Activated CD4-positive, alpha-beta memory T cell treated with anti-CD3 and anti-CD28 coated beads for 36 hours (primary cell): ENCODE measurements at regions of chr17 and their contacts with region 1.

Region 1: GRCh38 chr17:66633317-66633965 is 201.5 kb upstream of the CACNG5 start:
- DNase-seq: peak; percentile 70
- H3K4me3 Mint-ChIP-seq: no peak overlapping the region
- H3K27ac Mint-ChIP-seq: peak overlapping the region; percentile 61
- H3K4me1 Mint-ChIP-seq: peaks cover 55% of the 10 kb centered on the region
- H3K27me3 Mint-ChIP-seq: no peaks in the 10 kb centered on the region

Region 2: DNA sequence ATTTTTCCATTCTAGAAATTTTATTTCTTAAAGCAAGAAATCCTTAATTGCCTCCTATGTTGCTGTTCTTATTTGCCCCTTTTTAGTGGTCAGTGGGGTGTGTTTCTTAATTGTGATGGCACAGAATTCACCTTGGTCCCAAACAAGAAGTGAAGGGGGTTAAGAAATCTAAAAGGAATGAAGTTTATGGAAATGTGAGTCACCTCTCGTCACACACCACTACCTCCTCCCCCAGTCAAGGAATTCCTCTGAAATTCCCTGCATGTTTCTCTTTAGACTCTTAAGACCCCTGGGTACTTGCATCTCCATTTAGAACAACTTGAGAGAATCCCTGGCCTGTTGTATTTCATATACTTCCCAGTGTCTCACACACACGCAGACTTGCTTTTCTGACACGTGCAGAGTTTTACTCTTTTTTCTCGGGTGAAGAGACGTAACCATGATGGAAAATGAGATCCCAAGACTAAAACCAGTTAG is 83.7 kb before region 1 on chr17:
- CTCF ChIA-PET with region 1: interaction called, 7 read pairs
- POLR2A ChIA-PET with region 1: no interaction called
- intact Hi-C with region 1: loop called (anchors 1 kb)
- DNase-seq: no peak
- H3K4me3 Mint-ChIP-seq: no peak overlapping the region
- H3K27ac Mint-ChIP-seq: no peak overlapping the region
- H3K4me1 Mint-ChIP-seq: peaks cover 56% of the 10 kb centered on the region
- H3K27me3 Mint-ChIP-seq: no peaks in the 10 kb centered on the region

Region 3: GRCh38 chr17:66655861-66656260 is 22.4 kb after region 1 on chr17:
- CTCF ChIA-PET with region 1: no interaction called
- POLR2A ChIA-PET with region 1: interaction called, 3 read pairs
- intact Hi-C with region 1: loop called (anchors 2 kb)
- DNase-seq: peak; percentile 85
- H3K4me3 Mint-ChIP-seq: no peak overlapping the region
- H3K27ac Mint-ChIP-seq: peak overlapping the region; percentile 68
- H3K4me1 Mint-ChIP-seq: peaks cover 54% of the 10 kb centered on the region
- H3K27me3 Mint-ChIP-seq: no peaks in the 10 kb centered on the region

Region 4: GRCh38 chr17:66667491-66668030 is 34.1 kb after region 1 on chr17:
- CTCF ChIA-PET with region 1: no interaction called
- POLR2A ChIA-PET with region 1: no interaction called
- intact Hi-C with region 1: loop called (anchors 1 kb)
- DNase-seq: peak; percentile 85
- H3K4me3 Mint-ChIP-seq: peak overlapping the region; percentile 31
- H3K27ac Mint-ChIP-seq: peak overlapping the region; percentile 69
- H3K4me1 Mint-ChIP-seq: peaks cover 80% of the 10 kb centered on the region
- H3K27me3 Mint-ChIP-seq: no peaks in the 10 kb centered on the region

Region 5: GRCh38 chr17:66691644-66692420 is 58.4 kb after region 1 on chr17:
- CTCF ChIA-PET with region 1: no interaction called
- POLR2A ChIA-PET with region 1: no interaction called
- intact Hi-C with region 1: no loop called
- DNase-seq: no peak
- H3K4me3 Mint-ChIP-seq: no peak overlapping the region
- H3K27ac Mint-ChIP-seq: peak overlapping the region; percentile 8
- H3K4me1 Mint-ChIP-seq: peaks cover 14% of the 10 kb centered on the region
- H3K27me3 Mint-ChIP-seq: no peaks in the 10 kb centered on the region

Region 6: GRCh38 chr17:66727639-66728570 is 94.5 kb after region 1 on chr17:
- CTCF ChIA-PET with region 1: no interaction called
- POLR2A ChIA-PET with region 1: no interaction called
- intact Hi-C with region 1: no loop called
- DNase-seq: peak; percentile 60
- H3K4me3 Mint-ChIP-seq: no peak overlapping the region
- H3K27ac Mint-ChIP-seq: no peak overlapping the region
- H3K4me1 Mint-ChIP-seq: peaks cover 6% of the 10 kb centered on the region
- H3K27me3 Mint-ChIP-seq: no peaks in the 10 kb centered on the region

Region 7: DNA sequence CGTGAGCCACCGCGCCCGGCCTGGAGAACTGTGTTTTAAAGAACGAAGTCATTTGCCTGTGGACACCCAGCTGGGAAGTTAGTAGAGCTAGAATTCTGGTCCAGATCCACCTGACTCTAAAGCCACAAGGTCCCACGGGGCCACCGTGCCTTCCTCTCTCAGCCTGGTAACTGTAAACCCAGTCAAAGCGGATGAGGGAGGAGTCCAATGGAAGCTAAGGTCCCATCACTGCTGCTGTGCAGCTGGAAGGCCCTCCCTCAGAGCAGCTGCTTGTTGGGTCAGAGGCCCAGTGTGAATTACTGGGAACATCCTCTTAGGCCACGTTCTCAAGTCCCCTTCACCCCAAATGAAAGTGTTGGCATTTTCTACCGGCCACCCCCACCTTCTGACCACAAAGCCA is 152.7 kb after region 1 on chr17:
- CTCF ChIA-PET with region 1: no interaction called
- POLR2A ChIA-PET with region 1: no interaction called
- intact Hi-C with region 1: no loop called
- DNase-seq: no peak
- H3K4me3 Mint-ChIP-seq: no peak overlapping the region
- H3K27ac Mint-ChIP-seq: no peak overlapping the region
- H3K4me1 Mint-ChIP-seq: no peaks in the 10 kb centered on the region
- H3K27me3 Mint-ChIP-seq: no peaks in the 10 kb centered on the region